K562 (cell line): ENCODE measurements at regions of chr1 and their contacts with region 1.

Region 1: DNA sequence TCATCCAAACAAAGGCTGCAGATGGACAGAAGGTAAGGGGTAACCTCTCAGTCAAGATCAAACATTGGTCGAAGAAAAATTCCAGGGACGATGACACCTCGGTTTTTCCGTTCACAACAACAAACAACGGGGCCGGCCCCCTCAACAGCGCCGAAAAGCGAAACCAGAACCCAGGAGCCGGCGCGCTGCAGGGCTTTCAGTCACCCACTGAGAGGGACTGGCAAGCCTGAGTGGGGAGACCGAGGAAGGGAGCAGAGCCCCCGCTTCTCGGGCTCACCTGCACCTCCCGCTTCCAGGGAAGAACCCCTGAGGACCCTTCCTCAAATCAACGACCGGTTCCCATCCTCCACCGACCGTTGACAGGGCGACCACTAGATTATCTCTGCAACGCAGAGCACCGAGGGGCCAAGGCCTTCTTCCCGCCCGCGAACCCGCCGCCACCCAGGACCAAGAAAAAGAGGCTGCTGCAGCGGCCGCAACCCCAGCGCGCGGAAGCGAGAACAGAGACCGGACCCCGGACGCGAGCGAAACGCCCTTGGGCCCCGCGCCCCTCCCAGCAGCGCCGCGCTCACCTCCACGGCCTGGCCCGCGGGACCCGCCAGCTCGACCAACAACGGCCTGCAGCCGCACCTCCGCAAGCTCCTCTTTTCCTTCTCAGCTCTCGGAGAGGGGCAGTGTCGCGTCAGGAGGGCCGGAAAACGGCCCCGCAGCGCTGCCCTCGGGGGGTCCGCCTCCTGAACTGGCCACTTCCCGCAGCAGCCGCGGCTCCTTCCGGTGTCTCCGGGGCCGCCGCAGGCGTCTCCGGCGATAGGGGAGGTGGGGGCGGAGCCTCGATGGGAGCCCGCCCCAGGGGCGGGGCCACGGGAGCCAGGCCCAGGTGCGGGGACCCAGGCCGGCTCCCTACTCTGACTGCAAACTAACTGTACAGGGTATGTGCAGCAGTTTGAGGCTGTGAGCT is at the start of gene USP33:
- DNase-seq: peak; percentile 94 to 96 (median 94)
- ATAC-seq: peak; percentile 94
- H3K4me3 ChIP-seq: peak within 1 kb of the TSS; percentile 99
- H3K27ac ChIP-seq: peak within 1 kb of the TSS; percentile 92
- H3K4me1 ChIP-seq: peaks cover 20 to 32% of the 10 kb centered on the region in 2 experiments
- H3K27me3 ChIP-seq: no peaks in the 10 kb centered on the region
- CTCF ChIP-seq: peak in 2 of 3 experiments; percentile 4 to 12; a peak in 1 of 6 replicates
- EP300 ChIP-seq: no peak
- POLR2A ChIP-seq: peak; percentile 83
- RAD21 ChIP-seq: no peak
- polyA plus RNA-seq, gene USP33: 22.4 to 24.1 TPM

Region 2: GRCh38 chr1:77706321-77706720 is 53.0 kb before region 1 on chr1:
- CTCF ChIA-PET with region 1: no interaction called
- POLR2A ChIA-PET with region 1: no interaction called
- in situ Hi-C with region 1: no loop called
- intact Hi-C with region 1: loop called (anchors 2 kb)
- DNase-seq: no peak
- ATAC-seq: no peak
- H3K4me3 ChIP-seq: no peak overlapping the region
- H3K27ac ChIP-seq: no peak overlapping the region; the same call in 2 of the 3 replicates
- H3K4me1 ChIP-seq: peaks cover 3 to 17% of the 10 kb centered on the region in 2 experiments; a peak in 4 of 5 replicates
- H3K27me3 ChIP-seq: no peaks in the 10 kb centered on the region
- CTCF ChIP-seq: no peak
- EP300 ChIP-seq: no peak
- POLR2A ChIP-seq: no peak
- RAD21 ChIP-seq: no peak

Region 3: DNA sequence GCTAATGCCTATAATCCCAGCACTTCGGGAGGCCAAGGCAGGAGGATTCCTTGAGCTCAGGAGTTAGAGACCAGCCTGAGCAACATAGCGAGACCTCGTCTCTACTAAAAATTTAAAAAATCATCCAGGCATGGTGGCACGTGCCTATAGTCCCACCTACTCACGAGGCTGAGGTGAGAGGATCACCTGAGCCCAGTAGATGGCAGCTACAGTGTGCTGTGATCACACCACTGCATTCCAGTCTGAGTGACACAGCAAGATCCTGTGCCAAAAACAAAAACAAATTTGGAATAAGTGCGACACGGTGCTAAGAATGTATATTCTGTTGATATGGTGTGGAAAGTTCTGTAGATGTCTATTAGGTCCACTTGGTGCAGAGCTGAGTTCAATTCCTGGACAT is 14.8 kb before region 1 on chr1:
- CTCF ChIA-PET with region 1: interaction called, 3 read pairs
- POLR2A ChIA-PET with region 1: interaction called, 10 read pairs
- in situ Hi-C with region 1: no loop called
- intact Hi-C with region 1: no loop called
- DNase-seq: peak in 1 of 4 experiments; percentile 18
- ATAC-seq: peak; percentile 84
- H3K4me3 ChIP-seq: no peak overlapping the region
- H3K27ac ChIP-seq: no peak overlapping the region
- H3K4me1 ChIP-seq: peaks cover 0 to 7% of the 10 kb centered on the region in 2 experiments; a peak in 2 of 5 replicates
- H3K27me3 ChIP-seq: no peaks in the 10 kb centered on the region
- CTCF ChIP-seq: peak in 1 of 3 experiments; percentile 19; a peak in 1 of 6 replicates
- EP300 ChIP-seq: no peak
- POLR2A ChIP-seq: no peak
- RAD21 ChIP-seq: no peak

Region 4: DNA sequence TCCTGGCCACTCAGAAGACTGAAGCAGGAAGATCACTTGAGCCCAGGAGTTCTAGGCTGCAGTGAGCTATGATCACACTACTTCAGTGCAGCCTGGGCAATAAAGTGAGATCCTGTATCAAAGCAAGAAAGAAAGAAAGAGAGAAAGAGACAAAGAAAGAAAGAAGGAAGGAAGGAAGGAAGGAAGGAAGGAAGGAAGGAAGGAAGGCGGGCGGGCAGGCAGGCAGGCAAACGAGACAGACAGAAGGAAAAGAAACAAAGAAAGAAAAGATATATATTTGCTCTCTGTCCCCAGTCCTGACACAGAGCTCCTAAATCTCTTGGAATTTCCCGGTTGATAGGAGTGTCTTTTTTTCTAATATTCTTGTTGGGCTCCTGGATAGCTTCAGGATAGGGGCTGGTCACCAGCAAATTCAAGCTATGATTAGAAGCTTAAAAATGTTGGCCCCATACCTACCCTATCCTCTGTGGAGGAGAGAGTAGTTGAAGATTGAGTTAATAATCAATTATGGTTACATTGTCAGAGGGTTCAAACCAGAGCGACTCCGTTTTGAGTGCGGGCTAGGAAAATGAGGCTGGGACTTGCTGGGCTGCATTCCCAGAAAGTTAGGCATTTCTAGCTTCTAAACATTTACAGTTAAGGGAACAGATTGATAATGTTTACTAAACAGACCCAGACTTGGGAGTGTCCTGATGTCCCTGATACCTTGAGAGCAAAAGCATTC is 16.8 kb after region 1 on chr1:
- CTCF ChIA-PET with region 1: no interaction called
- POLR2A ChIA-PET with region 1: interaction called, 3 read pairs
- in situ Hi-C with region 1: no loop called
- intact Hi-C with region 1: loop called (anchors 2 kb)
- DNase-seq: no peak
- ATAC-seq: no peak
- H3K4me3 ChIP-seq: no peak overlapping the region
- H3K27ac ChIP-seq: no peak overlapping the region
- H3K4me1 ChIP-seq: peaks cover 0 to 6% of the 10 kb centered on the region in 2 experiments; a peak in 2 of 5 replicates
- H3K27me3 ChIP-seq: no peaks in the 10 kb centered on the region
- CTCF ChIP-seq: no peak
- EP300 ChIP-seq: no peak
- POLR2A ChIP-seq: no peak
- RAD21 ChIP-seq: no peak

Region 5: DNA sequence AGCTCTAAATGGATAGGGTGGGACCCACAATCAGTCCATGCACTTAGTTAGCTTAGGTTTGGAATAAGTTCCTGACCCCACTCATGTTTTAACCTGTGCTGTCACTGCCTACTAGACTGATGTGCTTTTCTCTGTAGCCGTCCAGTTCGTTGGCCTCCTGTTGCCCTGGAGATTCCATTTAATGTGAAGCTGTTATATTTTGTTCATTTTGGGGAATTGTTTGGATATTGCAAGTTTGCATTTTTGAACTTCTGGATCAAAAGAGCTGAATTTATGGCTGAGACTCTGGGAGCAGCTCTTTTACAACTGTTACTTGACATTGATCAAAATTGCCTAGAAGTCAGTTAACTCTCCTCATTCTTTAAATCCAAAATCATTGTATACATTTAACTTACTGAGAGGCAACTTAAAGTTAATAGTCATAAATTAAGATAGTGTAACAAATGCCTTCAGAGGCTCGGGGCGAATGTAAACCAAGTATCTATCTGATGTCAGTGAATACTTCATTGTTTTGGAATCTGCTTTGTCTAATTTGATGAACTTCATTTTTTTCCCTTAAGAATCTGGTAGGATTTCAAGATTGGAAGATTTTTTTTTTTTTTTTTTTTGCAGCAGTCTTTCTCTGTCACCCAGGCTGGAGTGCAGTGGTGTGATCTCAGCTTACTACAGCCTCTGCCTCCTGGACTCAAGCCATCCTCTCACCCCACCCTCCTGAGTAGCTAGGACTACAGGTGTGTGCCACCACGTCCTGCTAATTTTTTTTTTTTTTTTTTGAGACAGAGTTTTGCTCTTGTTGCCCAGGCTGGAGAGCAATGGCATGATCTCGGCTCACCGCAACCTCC is 58.2 kb after region 1 on chr1:
- CTCF ChIA-PET with region 1: no interaction called
- POLR2A ChIA-PET with region 1: no interaction called
- in situ Hi-C with region 1: no loop called
- intact Hi-C with region 1: no loop called
- DNase-seq: no peak
- ATAC-seq: no peak
- H3K4me3 ChIP-seq: no peak overlapping the region
- H3K27ac ChIP-seq: no peak overlapping the region
- H3K4me1 ChIP-seq: no peaks in the 10 kb centered on the region
- H3K27me3 ChIP-seq: no peaks in the 10 kb centered on the region
- CTCF ChIP-seq: no peak
- EP300 ChIP-seq: no peak
- POLR2A ChIP-seq: no peak
- RAD21 ChIP-seq: no peak

Region 6: DNA sequence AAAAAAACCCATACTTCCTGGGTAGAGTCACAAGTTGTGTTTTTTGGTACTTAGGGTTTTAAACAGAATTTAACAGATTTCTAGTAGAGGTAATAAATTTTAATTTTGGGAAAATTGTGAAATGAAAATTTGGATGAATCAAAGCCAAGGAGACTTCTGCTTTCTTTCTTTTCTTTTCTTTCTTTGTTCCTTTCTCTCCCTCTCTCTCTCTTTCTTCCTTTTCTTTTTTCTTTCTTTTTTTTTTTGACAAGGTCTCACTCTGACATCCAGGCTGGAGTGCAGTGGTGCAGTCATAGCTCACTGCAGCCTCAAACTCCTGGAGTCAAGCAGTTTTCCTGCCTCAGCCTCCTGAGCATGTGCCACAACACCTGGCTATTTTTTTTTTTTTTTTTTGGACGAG is 82.2 kb after region 1 on chr1:
- CTCF ChIA-PET with region 1: no interaction called
- POLR2A ChIA-PET with region 1: no interaction called
- in situ Hi-C with region 1: no loop called
- intact Hi-C with region 1: no loop called
- DNase-seq: no peak
- ATAC-seq: no peak
- H3K4me3 ChIP-seq: no peak overlapping the region
- H3K27ac ChIP-seq: no peak overlapping the region
- H3K4me1 ChIP-seq: no peaks in the 10 kb centered on the region
- H3K27me3 ChIP-seq: no peaks in the 10 kb centered on the region
- CTCF ChIP-seq: no peak
- EP300 ChIP-seq: no peak
- POLR2A ChIP-seq: no peak
- RAD21 ChIP-seq: no peak